ENCODE measurements at regions of chr16 and their contacts with region 1.

Region 1: DNA sequence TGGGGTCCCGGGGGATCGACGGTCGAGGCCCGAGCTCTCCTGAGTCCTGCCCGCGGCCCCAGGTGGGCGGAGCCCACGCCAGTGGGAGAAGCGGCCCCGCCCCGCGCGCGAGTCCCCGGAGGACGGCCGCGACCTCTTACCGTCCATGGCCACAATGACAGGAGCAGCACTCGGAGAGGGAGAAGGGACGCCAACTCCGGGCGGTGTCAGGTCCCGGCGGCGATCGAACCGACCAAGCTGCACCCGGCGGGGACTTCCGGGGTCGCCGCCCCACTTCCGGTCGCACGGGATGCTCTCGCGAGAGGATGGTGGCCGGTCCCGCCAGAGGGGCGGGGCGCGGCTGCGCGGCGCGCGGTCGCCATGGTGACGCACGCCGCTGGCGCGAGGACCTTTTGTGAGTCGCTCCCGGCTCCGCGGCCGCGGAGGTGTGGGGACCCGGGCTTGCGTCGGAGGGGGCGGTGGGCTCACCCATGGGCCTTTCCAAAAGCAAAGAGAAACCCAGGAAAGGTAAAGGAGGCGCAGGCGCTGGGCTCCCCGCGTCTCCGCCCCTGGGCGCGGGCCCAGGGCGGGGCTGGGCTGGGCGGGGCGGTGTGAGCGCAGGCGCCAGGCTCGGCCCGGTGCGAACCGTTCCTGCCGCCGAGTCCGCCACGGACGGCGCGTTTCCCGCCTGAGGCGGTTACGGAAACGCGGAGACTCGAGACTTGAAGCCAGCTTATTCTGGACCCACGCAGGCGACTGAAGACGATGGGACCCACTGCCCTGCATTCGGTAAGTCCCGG is at the starts of genes CHMP1A and SPATA33:
- DNase-seq: peak; percentile 90 to 97 (median 94)
- H3K4me3 ChIP-seq: peak within 1 kb of the TSS; percentile 30 to 92
- H3K4me3 Mint-ChIP-seq: peak within 1 kb of the TSS; percentile 85 to 91 (median 88)
- H3K27ac ChIP-seq: peak within 1 kb of the TSS; percentile 93
- H3K27ac Mint-ChIP-seq: peak within 1 kb of the TSS; percentile 85 to 92 (median 91)
- H3K4me1 ChIP-seq: peaks cover 21% of the 10 kb centered on the region
- H3K4me1 Mint-ChIP-seq: peaks cover 13 to 46% (median 26%) of the 10 kb centered on the region in 4 donors
- H3K27me3 ChIP-seq: no peaks in the 10 kb centered on the region
- H3K27me3 Mint-ChIP-seq: no peaks in the 10 kb centered on the region
- total RNA-seq, gene CHMP1A: 77.3 to 88.9 TPM
- total RNA-seq, gene SPATA33: 8.6 to 10.5 TPM

Region 2: GRCh38 chr16:89319883-89320781 is 337.5 kb before region 1 on chr16:
- CTCF ChIA-PET with region 1: no interaction called
- POLR2A ChIA-PET with region 1: no interaction called
- intact Hi-C with region 1: no loop called
- DNase-seq: no peak
- H3K4me3 ChIP-seq: no peak overlapping the region
- H3K4me3 Mint-ChIP-seq: peak overlapping the region in 7 of 8 donors; percentile 48 to 77 (median 68)
- H3K27ac ChIP-seq: no peak overlapping the region
- H3K27ac Mint-ChIP-seq: peak overlapping the region in 6 of 7 donors; percentile 55 to 98 (median 74)
- H3K4me1 ChIP-seq: peaks cover 99% of the 10 kb centered on the region
- H3K4me1 Mint-ChIP-seq: peaks cover 72 to 96% (median 89%) of the 10 kb centered on the region in 4 donors
- H3K27me3 ChIP-seq: no peaks in the 10 kb centered on the region
- H3K27me3 Mint-ChIP-seq: no peaks in the 10 kb centered on the region

Region 3: DNA sequence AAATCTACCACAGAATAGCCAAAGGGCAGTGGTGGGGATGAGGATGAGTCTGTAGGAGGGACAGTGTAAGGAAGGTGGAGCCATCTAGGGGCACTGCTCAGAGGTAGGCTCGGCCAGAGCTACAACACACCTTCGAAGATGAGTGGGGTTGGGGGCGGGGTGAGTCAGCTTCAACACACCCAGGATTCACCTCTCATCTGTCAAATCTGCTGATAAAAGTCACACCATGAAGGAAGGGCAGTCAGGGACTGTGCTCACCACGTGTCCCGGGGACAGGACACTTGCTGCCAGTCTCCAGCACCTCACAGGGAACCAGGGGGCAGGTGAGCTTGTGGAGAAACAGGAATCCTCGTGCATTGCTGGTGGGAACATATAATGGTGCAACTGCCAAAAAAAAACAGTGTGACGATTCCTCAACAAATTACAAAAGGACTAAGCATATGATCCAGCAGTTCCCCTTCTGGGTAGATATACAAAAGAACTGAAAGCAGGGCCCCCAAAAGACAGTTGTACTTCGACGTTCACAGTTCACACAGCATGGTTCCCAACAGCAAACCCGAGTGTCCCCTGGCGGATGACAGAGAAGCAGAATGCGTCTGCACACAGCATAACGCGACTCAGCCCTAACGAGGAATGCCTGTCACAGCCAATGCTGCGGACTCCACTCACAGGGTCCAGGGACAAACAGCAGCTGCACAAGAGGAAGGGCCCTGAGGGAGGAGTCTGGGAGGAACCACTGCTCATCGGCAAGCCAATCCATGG is 300.4 kb before region 1 on chr16:
- CTCF ChIA-PET with region 1: no interaction called
- POLR2A ChIA-PET with region 1: no interaction called
- intact Hi-C with region 1: no loop called
- DNase-seq: no peak
- H3K4me3 ChIP-seq: no peak overlapping the region
- H3K4me3 Mint-ChIP-seq: peak overlapping the region in 7 of 8 donors; percentile 40 to 86 (median 80)
- H3K27ac ChIP-seq: peak overlapping the region; percentile 60
- H3K27ac Mint-ChIP-seq: peak overlapping the region; percentile 75 to 90 (median 87)
- H3K4me1 ChIP-seq: peaks cover 88% of the 10 kb centered on the region
- H3K4me1 Mint-ChIP-seq: peaks cover 68 to 95% (median 83%) of the 10 kb centered on the region in 4 donors
- H3K27me3 ChIP-seq: no peaks in the 10 kb centered on the region
- H3K27me3 Mint-ChIP-seq: no peaks in the 10 kb centered on the region

Region 4: DNA sequence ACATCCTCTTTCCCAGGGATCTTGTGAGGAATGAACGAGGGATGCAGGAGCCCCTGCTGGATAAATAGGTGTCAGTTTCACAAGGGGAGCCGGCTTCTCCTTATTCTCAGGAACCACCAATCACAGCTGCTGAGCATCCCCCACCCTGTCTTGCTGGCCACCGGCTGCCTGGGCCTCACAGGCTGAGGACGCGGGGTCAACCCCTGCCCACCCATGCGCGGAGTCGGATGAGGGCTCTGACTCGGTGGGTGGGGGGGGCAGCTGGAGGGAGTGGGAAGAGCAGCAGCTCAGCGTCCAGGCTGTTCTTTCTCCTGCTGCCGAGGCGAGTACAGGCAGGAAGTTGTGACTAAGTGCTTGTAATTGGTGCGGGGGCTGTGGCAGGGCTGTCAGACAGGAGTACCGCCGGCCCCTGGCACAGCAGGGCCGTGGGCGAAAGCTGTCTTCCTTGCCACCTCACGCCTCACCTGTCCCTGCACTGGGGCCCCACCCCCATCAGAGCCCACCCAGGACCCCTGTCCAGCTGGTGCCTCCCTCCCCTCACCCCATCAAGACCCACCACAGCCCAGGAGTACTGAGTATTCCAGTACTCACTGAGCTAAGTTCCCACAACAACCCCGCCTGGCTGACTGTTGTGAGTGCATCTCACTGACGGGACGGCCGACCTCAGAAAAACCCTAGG is 55.2 kb before region 1 on chr16:
- CTCF ChIA-PET with region 1: no interaction called
- POLR2A ChIA-PET with region 1: no interaction called
- intact Hi-C with region 1: no loop called
- DNase-seq: peak in 3 of 5 donors; percentile 31 to 73 (median 40)
- H3K4me3 ChIP-seq: no peak overlapping the region
- H3K4me3 Mint-ChIP-seq: peak overlapping the region in 7 of 8 donors; percentile 20 to 49 (median 41)
- H3K27ac ChIP-seq: no peak overlapping the region
- H3K27ac Mint-ChIP-seq: peak overlapping the region in 3 of 7 donors; percentile 7 to 60 (median 38)
- H3K4me1 ChIP-seq: peaks cover 15% of the 10 kb centered on the region
- H3K4me1 Mint-ChIP-seq: peaks cover 9 to 22% (median 13%) of the 10 kb centered on the region in 4 donors
- H3K27me3 ChIP-seq: no peaks in the 10 kb centered on the region
- H3K27me3 Mint-ChIP-seq: no peaks in the 10 kb centered on the region

Region 5: DNA sequence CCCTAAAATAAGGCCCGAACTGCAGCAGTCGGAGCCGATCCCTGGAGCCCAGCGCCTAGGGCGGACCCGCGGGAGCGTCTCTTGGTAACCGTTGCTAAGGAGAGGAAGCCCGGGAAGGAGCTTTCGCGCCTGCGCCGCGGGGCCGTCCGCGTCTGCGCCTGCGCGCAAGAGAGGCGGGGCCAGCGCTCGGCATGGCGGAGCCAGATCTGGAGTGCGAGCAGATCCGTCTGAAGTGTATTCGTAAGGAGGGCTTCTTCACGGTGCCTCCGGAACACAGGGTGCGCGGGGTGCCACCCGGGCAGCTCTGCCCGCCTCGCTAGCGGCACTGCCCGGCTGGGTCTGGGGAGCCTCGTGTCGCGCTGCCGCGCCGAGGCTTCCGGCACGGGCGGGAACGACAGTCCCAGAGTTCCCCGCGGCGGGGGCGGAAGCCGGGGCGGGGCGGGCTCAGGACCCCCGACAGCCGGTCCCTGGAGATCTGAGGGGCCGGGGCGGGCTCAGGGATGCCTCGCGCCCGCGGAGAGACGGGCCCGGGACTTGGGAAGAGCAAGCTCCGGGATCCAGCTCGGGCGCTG is 29.0 kb after region 1 on chr16 and contains the start of gene CDK10:
- CTCF ChIA-PET with region 1: no interaction called
- POLR2A ChIA-PET with region 1: interaction called, 9 read pairs
- intact Hi-C with region 1: loop called (anchors 1 kb)
- DNase-seq: peak; percentile 78 to 95 (median 87)
- H3K4me3 ChIP-seq: peak within 1 kb of the TSS; percentile 57 to 84
- H3K4me3 Mint-ChIP-seq: peak within 1 kb of the TSS; percentile 84 to 96 (median 92)
- H3K27ac ChIP-seq: peak within 1 kb of the TSS; percentile 84
- H3K27ac Mint-ChIP-seq: peak within 1 kb of the TSS; percentile 78 to 98 (median 94)
- H3K4me1 ChIP-seq: peaks cover 14% of the 10 kb centered on the region
- H3K4me1 Mint-ChIP-seq: peaks cover 9 to 25% (median 13%) of the 10 kb centered on the region in 4 donors
- H3K27me3 ChIP-seq: no peaks in the 10 kb centered on the region
- H3K27me3 Mint-ChIP-seq: no peaks in the 10 kb centered on the region
- total RNA-seq, gene CDK10: 134 to 140 TPM

Measured in CD4-positive, alpha-beta memory T cell (primary cell).